ENCODE measurements at regions of chr10 and their contacts with region 1.

Region 1: GRCh38 chr10:14556285-14556956 is 218.3 kb downstream of the FAM107B start:
- DNase-seq: peak; percentile 58 to 72
- ATAC-seq: peak; percentile 63 to 79 (median 71)
- H3K4me3 ChIP-seq: no peak overlapping the region
- H3K4me3 Mint-ChIP-seq: peak overlapping the region; percentile 65
- H3K27ac ChIP-seq: peak overlapping the region; percentile 74
- H3K27ac Mint-ChIP-seq: peak overlapping the region; percentile 95 to 98
- H3K4me1 ChIP-seq: peaks cover 81% of the 10 kb centered on the region
- H3K4me1 Mint-ChIP-seq: peaks cover 91 to 92% of the 10 kb centered on the region in 2 donors
- H3K27me3 ChIP-seq: no peaks in the 10 kb centered on the region
- H3K27me3 Mint-ChIP-seq: no peaks in the 10 kb centered on the region
- CTCF ChIP-seq: peak; percentile 56

Region 2: GRCh38 chr10:13673156-13673555 is 883.3 kb before region 1 on chr10:
- intact Hi-C with region 1: no loop called
- DNase-seq: no peak
- ATAC-seq: no peak
- H3K4me3 ChIP-seq: no peak overlapping the region
- H3K4me3 Mint-ChIP-seq: no peak overlapping the region
- H3K27ac ChIP-seq: no peak overlapping the region
- H3K27ac Mint-ChIP-seq: no peak overlapping the region
- H3K4me1 ChIP-seq: no peaks in the 10 kb centered on the region
- H3K4me1 Mint-ChIP-seq: no peaks in the 10 kb centered on the region
- H3K27me3 ChIP-seq: no peaks in the 10 kb centered on the region
- H3K27me3 Mint-ChIP-seq: no peaks in the 10 kb centered on the region
- CTCF ChIP-seq: no peak

Region 3: GRCh38 chr10:14191871-14192270 is 364.6 kb before region 1 on chr10:
- intact Hi-C with region 1: loop called (anchors 5 kb)
- DNase-seq: no peak
- ATAC-seq: no peak
- H3K4me3 ChIP-seq: no peak overlapping the region
- H3K4me3 Mint-ChIP-seq: no peak overlapping the region
- H3K27ac ChIP-seq: no peak overlapping the region
- H3K27ac Mint-ChIP-seq: no peak overlapping the region
- H3K4me1 ChIP-seq: no peaks in the 10 kb centered on the region
- H3K4me1 Mint-ChIP-seq: no peaks in the 10 kb centered on the region
- H3K27me3 ChIP-seq: peaks cover 5% of the 10 kb centered on the region
- H3K27me3 Mint-ChIP-seq: peaks cover 21 to 60% of the 10 kb centered on the region in 2 donors
- CTCF ChIP-seq: no peak

Region 4: DNA sequence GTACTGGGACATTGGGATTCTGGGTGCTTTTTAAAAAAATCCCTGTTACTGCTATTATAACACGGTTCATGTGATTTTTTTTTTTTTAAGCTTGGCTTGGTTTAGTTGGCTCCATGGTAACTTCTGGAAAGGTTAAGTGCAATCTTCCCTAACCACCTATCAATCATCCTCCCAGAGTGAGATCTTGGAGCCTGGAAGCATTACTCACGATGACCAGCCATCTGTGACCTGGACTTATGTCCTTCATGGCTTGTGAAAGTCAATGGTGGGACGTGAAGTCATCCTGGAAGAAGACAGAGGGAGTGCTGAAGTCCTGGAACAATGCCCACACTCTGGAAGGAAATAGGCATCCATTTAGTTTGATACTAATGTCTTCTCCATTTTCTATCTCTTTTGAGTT is 90.2 kb before region 1 on chr10:
- intact Hi-C with region 1: no loop called
- DNase-seq: no peak
- ATAC-seq: no peak
- H3K4me3 ChIP-seq: no peak overlapping the region
- H3K4me3 Mint-ChIP-seq: no peak overlapping the region
- H3K27ac ChIP-seq: no peak overlapping the region
- H3K27ac Mint-ChIP-seq: no peak overlapping the region
- H3K4me1 ChIP-seq: no peaks in the 10 kb centered on the region
- H3K4me1 Mint-ChIP-seq: no peaks in the 10 kb centered on the region
- H3K27me3 ChIP-seq: no peaks in the 10 kb centered on the region
- H3K27me3 Mint-ChIP-seq: peaks cover 36 to 48% of the 10 kb centered on the region in 2 donors
- CTCF ChIP-seq: no peak

Region 5: GRCh38 chr10:14571866-14572507 is 15.6 kb after region 1 on chr10:
- intact Hi-C with region 1: loop called (anchors 2 kb)
- DNase-seq: peak; percentile 54 to 88
- ATAC-seq: peak; percentile 57 to 69 (median 63)
- H3K4me3 ChIP-seq: peak overlapping the region; percentile 24
- H3K4me3 Mint-ChIP-seq: peak overlapping the region; percentile 88
- H3K27ac ChIP-seq: peak overlapping the region; percentile 84
- H3K27ac Mint-ChIP-seq: peak overlapping the region; percentile 95 to 98
- H3K4me1 ChIP-seq: peaks cover 48% of the 10 kb centered on the region
- H3K4me1 Mint-ChIP-seq: peaks cover 61 to 63% of the 10 kb centered on the region in 2 donors
- H3K27me3 ChIP-seq: no peaks in the 10 kb centered on the region
- H3K27me3 Mint-ChIP-seq: no peaks in the 10 kb centered on the region
- CTCF ChIP-seq: no peak

Region 6: GRCh38 chr10:14648005-14648765 is 91.8 kb after region 1 on chr10:
- intact Hi-C with region 1: loop called (anchors 5 kb)
- DNase-seq: peak; percentile 57 to 90
- ATAC-seq: peak; percentile 85 to 90 (median 87)
- H3K4me3 ChIP-seq: peak overlapping the region; percentile 6
- H3K4me3 Mint-ChIP-seq: peak overlapping the region; percentile 76
- H3K27ac ChIP-seq: peak overlapping the region; percentile 96
- H3K27ac Mint-ChIP-seq: peak overlapping the region; percentile 94 to 96
- H3K4me1 ChIP-seq: peaks cover 29% of the 10 kb centered on the region
- H3K4me1 Mint-ChIP-seq: peaks cover 24 to 27% of the 10 kb centered on the region in 2 donors
- H3K27me3 ChIP-seq: no peaks in the 10 kb centered on the region
- H3K27me3 Mint-ChIP-seq: no peaks in the 10 kb centered on the region
- CTCF ChIP-seq: no peak

Region 7: DNA sequence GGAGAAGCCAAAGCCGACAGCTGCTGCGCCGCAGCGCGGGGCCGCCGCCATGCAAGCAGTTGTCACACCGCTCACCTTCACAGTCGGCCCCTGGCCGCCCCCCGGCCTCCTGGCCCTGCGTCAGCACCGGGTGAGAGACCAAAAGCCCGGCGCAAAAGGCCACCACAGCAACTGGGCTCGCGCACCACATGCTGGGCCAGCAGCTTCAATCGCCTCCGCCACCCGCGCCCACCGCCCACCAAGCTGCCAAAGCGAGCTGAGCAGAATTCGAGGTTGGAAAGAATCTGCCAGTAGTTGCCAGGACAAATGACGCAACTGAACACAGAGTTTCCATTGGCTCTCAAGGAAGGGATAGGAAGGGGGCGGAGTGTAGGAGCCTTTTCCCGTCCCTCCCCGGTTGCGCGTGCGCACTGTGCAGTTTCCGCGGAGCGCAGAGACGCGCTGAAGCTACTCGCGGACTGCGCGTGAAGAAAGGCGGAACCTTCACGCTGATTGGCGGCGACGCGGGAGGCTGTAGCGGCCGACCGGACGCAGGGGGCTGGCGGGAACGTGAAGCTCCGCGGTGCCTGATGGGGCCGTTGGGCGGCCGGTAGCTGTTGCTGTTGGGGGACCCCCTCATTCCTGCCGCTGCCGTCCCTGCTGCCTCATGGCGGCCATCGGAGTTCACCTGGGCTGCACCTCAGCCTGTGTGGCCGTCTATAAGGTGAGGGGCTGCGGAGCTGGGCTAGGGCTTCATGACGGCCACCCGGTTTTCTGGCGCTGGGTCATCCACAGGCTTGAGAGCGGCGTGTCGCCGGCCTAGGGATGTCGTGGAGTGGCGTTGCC is 281.5 kb after region 1 on chr10 and contains the starts of genes CDNF, HSPA14 and MSANTD7:
- intact Hi-C with region 1: loop called (anchors 5 kb)
- DNase-seq: peak; percentile 98 to 100
- ATAC-seq: peak; percentile 92 to 99 (median 93)
- H3K4me3 ChIP-seq: peak within 1 kb of the TSS; percentile 95
- H3K4me3 Mint-ChIP-seq: peak within 1 kb of the TSS; percentile 95
- H3K27ac ChIP-seq: peak within 1 kb of the TSS; percentile 92
- H3K27ac Mint-ChIP-seq: peak within 1 kb of the TSS; percentile 91 to 98
- H3K4me1 ChIP-seq: peaks cover 20% of the 10 kb centered on the region
- H3K4me1 Mint-ChIP-seq: peaks cover 15 to 30% of the 10 kb centered on the region in 2 donors
- H3K27me3 ChIP-seq: no peaks in the 10 kb centered on the region
- H3K27me3 Mint-ChIP-seq: no peaks in the 10 kb centered on the region
- CTCF ChIP-seq: no peak
- total RNA-seq, gene CDNF: 1.8 to 2.2 (median 1.9) TPM
- total RNA-seq, gene HSPA14: 18.9 to 25.6 (median 24.5) TPM
- total RNA-seq, gene MSANTD7: 19.6 to 25.1 (median 24.0) TPM